Calu3 (cell line): ENCODE measurements at regions of chr15 and their contacts with region 1.

Region 1: GRCh38 chr15:100341662-100342560 is at the start of gene ADAMTS17:
- DNase-seq: peak; percentile 96
- H3K4me3 Mint-ChIP-seq: peak within 1 kb of the TSS; percentile 62
- H3K27ac Mint-ChIP-seq: no peak within 1 kb of the TSS
- H3K4me1 Mint-ChIP-seq: peaks cover 7% of the 10 kb centered on the region
- H3K27me3 Mint-ChIP-seq: peaks cover 75% of the 10 kb centered on the region
- CTCF ChIP-seq: peak; percentile 88
- total RNA-seq, gene ADAMTS17: 3.5 and 7.3 TPM in 2 replicates

Region 2: DNA sequence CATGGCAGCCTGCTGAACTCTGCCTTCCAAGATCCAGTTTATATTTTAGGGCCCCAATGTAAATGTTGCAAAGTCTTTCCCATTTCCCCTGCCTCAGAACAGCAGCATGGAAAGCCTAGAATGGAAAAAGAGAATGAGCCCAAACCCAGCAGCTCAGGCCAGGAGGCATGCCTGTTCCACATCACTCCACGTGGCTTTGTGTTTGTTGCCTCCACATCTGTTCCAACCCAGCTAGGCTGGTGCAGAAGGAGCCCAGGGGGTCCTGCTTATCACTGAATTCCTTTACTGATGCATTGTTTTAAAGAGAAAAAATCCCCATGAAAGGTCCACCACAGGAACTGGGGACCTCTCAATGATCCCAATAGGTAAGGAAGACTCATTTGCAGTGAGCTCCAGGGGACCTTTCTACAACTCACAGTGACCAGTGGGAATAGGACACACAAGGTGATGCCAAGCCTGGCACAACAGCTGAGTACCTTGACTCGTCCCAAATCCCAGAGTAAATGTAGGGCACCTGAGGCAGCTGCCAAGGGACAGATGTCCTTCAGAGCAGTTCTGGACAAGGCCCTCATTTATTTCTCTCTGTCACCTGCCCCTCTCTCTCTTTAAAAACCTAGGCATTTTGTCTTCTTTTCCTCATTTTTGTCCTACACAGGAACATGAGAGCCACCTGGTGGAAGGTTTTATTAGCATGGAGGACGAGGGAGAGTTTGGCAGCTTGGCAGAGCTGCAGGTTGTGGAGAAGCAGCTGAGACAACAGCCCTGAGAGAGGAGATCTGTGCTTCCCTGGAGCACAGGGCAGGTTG is 41.6 kb after region 1 on chr15:
- CTCF ChIA-PET with region 1: interaction called, 10 read pairs
- intact Hi-C with region 1: loop called (anchors 2 kb)
- DNase-seq: peak; percentile 66
- H3K4me3 Mint-ChIP-seq: no peak overlapping the region
- H3K27ac Mint-ChIP-seq: no peak overlapping the region
- H3K4me1 Mint-ChIP-seq: no peaks in the 10 kb centered on the region
- H3K27me3 Mint-ChIP-seq: peaks cover 30% of the 10 kb centered on the region
- CTCF ChIP-seq: peak; percentile 24